Naive thymus-derived CD4-positive, alpha-beta T cell (primary cell): ENCODE measurements at regions of chr2 and their contacts with region 1.

Region 1: DNA sequence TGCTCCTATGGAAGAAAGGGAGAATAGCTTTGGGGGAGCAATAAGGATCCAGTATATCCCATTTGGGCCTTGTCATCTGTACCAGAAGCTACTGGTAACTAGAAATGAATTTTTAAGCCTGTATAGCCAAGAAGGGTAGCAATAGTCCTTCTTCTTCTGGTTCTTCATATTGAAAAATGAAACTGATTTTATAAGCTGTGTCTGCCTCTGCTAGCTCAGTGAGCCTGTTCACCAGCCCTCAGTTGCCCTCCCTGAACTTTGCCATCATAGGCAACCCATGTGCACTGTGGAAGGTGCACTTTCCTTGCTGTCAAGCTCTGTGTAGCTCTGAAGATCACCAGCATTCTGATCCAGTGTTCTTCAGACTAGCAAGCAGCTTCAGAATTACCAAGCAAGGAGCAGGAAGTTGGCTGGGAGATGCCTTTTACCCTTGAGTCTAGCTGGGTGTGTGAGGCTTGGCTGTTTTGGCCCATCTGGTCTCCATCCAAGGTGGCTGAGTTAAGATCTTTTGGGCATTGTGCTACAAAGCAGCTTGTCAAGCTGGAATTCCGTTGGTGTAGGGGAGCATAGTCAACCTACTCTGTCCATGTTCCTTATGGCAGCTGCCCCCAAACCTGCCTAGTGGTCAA is 55.8 kb upstream of the MGAT5 start:
- DNase-seq: no peak
- ATAC-seq: peak; percentile 10
- H3K4me3 ChIP-seq: no peak overlapping the region
- H3K4me3 Mint-ChIP-seq: peak overlapping the region; percentile 38 to 66 (median 52)
- H3K27ac ChIP-seq: no peak overlapping the region
- H3K27ac Mint-ChIP-seq: peak overlapping the region in 7 of 9 donors; percentile 16 to 76 (median 63)
- H3K4me1 ChIP-seq: peaks cover 15 to 16% of the 10 kb centered on the region in 2 donors
- H3K4me1 Mint-ChIP-seq: peaks cover 36 to 82% (median 65%) of the 10 kb centered on the region in 7 donors
- H3K27me3 ChIP-seq: no peaks in the 10 kb centered on the region
- H3K27me3 Mint-ChIP-seq: no peaks in the 10 kb centered on the region

Region 2: DNA sequence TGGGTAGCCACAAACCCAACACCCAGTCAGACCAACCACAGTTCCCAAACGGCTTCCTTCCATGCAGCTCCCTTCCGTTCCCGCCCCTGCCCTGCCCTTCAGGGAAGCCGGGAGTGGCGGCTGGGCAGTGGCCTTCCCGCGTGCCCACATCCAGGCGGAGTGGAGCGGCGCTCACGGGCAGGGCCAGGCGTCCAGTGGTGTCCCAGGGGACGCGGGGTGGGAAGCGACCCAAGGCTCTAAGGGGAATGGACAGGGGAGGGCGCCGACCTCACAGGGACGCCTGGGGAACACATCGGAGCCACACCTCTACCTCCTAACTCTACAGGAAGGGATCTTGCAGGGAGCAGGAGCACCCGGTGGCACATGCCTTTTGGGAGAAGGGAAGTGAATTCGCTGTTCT is 170.1 kb before region 1 on chr2:
- CTCF ChIA-PET with region 1: no interaction called
- POLR2A ChIA-PET with region 1: no interaction called
- intact Hi-C with region 1: no loop called
- DNase-seq: no peak
- ATAC-seq: no peak
- H3K4me3 ChIP-seq: no peak overlapping the region
- H3K4me3 Mint-ChIP-seq: no peak overlapping the region
- H3K27ac ChIP-seq: no peak overlapping the region
- H3K27ac Mint-ChIP-seq: no peak overlapping the region
- H3K4me1 ChIP-seq: no peaks in the 10 kb centered on the region
- H3K4me1 Mint-ChIP-seq: no peaks in the 10 kb centered on the region
- H3K27me3 ChIP-seq: no peaks in the 10 kb centered on the region
- H3K27me3 Mint-ChIP-seq: peaks cover 31 to 59% (median 42%) of the 10 kb centered on the region in 5 donors

Region 3: DNA sequence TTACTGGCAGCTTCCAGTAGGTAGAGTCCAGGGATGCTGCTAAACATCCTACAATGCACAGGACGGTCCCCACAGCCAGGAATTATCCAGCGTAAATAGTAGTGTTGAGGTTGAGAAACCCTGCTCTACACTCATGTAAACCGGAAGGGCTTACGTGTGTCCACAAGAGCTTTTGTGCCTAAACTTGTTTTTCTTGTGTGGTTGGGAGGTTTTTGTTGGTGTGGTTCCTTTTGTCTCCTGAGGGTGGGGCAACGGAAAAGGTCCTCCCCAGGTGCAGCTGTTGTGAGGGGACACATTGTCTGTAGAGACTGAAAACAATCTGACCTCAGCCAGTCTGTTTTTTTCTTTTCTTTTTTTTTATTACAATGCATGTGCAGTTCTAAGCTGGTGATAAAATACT is 16.9 kb before region 1 on chr2:
- CTCF ChIA-PET with region 1: interaction called, 7 read pairs
- POLR2A ChIA-PET with region 1: interaction called, 5 read pairs
- intact Hi-C with region 1: loop called in 1 of 2 experiments (anchors 2 kb)
- DNase-seq: peak in 8 of 9 donors; percentile 30 to 79 (median 68)
- ATAC-seq: peak; percentile 87
- H3K4me3 ChIP-seq: no peak overlapping the region
- H3K4me3 Mint-ChIP-seq: peak overlapping the region; percentile 54 to 86 (median 67)
- H3K27ac ChIP-seq: peak overlapping the region; percentile 18
- H3K27ac Mint-ChIP-seq: peak overlapping the region; percentile 84 to 97 (median 91)
- H3K4me1 ChIP-seq: peaks cover 22 to 45% of the 10 kb centered on the region in 2 donors
- H3K4me1 Mint-ChIP-seq: peaks cover 52 to 95% (median 93%) of the 10 kb centered on the region in 7 donors
- H3K27me3 ChIP-seq: no peaks in the 10 kb centered on the region
- H3K27me3 Mint-ChIP-seq: no peaks in the 10 kb centered on the region

Region 4: DNA sequence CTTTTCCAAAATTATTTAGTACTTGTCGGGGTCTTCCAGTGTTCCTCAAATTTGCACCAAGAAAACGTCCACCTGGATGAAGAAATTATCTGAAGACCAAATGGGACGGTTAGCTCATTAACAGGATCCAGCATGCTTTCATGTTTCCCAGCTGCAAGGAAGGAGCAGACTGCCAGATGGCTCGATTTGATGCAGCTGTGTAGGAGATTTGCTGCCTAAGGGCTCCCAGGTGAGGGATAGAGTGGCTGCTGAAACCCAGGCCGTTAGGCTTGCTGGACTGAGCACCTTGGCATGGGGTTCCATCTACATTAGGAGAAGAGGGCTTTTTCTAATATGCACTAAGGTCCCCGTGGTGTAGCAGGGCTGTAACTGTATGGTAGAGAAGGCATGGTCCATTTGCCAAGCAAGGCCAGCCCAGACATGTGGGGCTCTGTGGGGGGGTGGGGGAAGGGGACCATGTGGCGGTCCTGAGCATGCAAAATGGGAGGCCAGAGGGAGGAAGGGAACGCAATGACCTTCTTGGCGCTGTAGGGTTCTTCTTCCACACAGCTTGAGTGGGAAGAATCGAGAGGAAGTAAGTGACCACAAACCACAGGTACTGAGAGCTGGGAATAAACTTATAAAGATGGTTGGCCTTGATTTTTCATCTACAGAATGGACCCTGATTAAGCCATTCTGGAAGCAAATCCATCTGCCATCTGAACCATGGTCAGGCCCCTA is 376.7 kb after region 1 on chr2:
- CTCF ChIA-PET with region 1: no interaction called
- POLR2A ChIA-PET with region 1: no interaction called
- intact Hi-C with region 1: no loop called
- DNase-seq: no peak
- ATAC-seq: no peak
- H3K4me3 ChIP-seq: no peak overlapping the region
- H3K4me3 Mint-ChIP-seq: no peak overlapping the region
- H3K27ac ChIP-seq: no peak overlapping the region
- H3K27ac Mint-ChIP-seq: no peak overlapping the region
- H3K4me1 ChIP-seq: no peaks in the 10 kb centered on the region
- H3K4me1 Mint-ChIP-seq: peaks cover 0 to 1% (median 0%) of the 10 kb centered on the region in 7 donors
- H3K27me3 ChIP-seq: no peaks in the 10 kb centered on the region
- H3K27me3 Mint-ChIP-seq: peaks cover 0 to 7% (median 0%) of the 10 kb centered on the region in 5 donors